Vagina (tissue), 2 donors: ENCODE measurements at regions of chr3 and their contacts with region 1.

Region 1: DNA sequence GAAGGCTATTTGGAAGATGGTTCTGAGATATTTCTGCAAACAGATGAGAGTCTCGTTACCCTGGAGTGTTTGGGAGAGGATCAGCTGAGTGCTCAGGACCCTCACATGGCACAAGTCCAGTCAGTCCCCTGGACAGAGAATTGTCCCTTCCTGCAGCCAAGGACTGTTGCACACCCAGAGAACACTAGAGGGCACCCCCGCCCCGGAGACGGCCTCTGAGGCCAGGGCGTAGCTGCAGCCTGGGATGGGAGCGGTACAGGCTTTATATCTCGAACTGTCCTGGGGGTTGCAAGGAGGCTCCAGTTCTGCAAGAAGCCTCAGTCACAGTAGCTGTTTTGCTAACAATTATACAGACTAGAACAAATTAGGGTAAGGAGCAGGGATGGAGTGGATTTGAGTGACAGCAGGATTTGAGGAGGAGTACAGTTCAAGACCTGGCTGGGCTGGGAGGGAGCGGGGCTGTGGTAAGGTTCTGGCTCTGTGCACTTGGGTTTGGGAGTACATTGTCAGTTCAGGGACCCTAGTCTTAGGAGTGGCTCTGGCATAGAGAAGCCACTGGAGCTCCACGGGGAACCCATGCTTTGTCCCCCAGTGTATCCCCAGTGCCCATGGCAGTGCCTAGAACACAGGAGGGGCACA is 67.6 kb upstream of the HACD2 start:
- DNase-seq: no peak
- H3K4me3 ChIP-seq: no peak overlapping the region
- H3K27ac ChIP-seq: peak overlapping the region; percentile 81
- H3K4me1 ChIP-seq: peaks cover 52% of the 10 kb centered on the region
- H3K27me3 ChIP-seq: no peaks in the 10 kb centered on the region
- CTCF ChIP-seq: peak; percentile 72 to 88 (median 79)
- POLR2A ChIP-seq: no peak

Region 2: GRCh38 chr3:122481390-122481789 is 1171.1 kb before region 1 on chr3:
- intact Hi-C with region 1: no loop called
- DNase-seq: no peak
- H3K4me3 ChIP-seq: no peak overlapping the region
- H3K27ac ChIP-seq: no peak overlapping the region
- H3K4me1 ChIP-seq: peaks cover 17% of the 10 kb centered on the region
- H3K27me3 ChIP-seq: no peaks in the 10 kb centered on the region
- CTCF ChIP-seq: no peak
- POLR2A ChIP-seq: no peak

Region 3: DNA sequence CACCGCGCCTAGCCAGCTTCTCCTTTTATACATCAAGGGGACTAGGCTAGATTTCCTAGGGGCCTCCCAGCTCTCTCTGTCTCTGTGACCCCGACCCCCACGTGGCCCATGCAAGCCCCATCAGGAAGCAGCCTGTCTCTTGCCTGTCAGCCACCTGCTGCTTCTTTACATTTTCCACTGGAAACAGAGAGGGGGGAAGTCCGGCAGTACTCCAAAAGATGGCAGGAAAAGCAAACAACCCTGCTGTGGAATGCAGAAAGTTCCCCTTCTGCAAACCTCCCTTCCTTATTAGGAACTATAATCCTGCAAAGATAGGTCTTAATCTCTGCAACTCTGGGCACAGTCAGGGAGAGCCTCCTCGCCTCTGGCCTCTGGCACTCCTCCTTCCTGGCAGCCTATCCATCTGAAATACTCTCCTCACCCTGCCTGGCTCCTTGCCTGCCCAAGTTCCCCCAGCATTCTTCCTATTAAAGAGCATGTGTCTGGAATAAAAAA is 20.3 kb before region 1 on chr3:
- intact Hi-C with region 1: no loop called
- DNase-seq: peak in 1 of 2 donors; percentile 67
- H3K4me3 ChIP-seq: no peak overlapping the region
- H3K27ac ChIP-seq: no peak overlapping the region
- H3K4me1 ChIP-seq: peaks cover 38% of the 10 kb centered on the region
- H3K27me3 ChIP-seq: no peaks in the 10 kb centered on the region
- CTCF ChIP-seq: no peak
- POLR2A ChIP-seq: no peak

Region 4: DNA sequence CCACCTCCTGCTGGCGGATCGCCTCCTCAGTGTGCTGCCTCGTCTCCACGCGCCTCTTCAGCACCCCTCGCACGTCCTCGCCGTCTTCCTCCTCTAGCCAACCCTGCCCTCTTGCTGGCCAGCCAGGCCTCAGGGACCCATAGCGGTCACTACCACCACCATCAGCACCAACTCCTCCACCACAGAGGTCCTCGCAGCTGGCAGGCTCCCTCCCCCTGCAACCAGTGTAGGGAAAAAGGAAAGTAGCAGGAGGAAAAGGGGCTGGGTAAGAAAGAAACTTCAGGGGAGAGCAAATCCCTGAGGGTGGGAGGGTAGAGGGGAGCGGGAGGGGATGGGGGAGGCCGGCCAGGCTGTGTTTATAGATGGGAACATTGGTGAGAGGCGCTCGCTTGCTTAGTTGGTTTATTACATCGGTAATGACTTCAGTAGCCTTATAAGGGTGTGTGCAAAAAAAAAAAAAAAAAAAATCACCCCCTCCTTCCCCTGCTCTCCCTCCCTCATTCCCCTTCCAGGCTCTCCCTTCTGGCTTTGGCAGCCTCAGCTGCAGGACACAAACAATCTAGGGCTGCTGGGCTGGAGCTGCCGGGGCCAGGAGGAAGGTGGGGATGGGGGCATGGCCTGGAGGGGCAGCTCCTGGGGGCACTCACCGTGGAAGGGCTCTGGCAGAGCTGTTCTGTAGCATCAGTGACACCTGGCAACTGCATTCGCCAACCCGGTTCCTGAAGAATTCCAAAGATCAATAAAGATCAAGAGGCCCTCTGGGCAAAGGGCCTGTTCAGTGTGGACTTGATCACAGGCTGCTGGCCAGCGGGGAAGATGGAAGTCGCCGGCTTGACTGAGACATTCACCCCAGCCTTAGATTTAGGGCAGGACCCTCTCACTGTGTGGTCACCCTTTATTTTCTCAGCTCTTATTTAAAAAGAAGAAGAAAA is 48.6 kb after region 1 on chr3:
- intact Hi-C with region 1: loop called (anchors 5 kb)
- DNase-seq: no peak
- H3K4me3 ChIP-seq: peak overlapping the region; percentile 50 to 58
- H3K27ac ChIP-seq: peak overlapping the region; percentile 79
- H3K4me1 ChIP-seq: peaks cover 7% of the 10 kb centered on the region
- H3K27me3 ChIP-seq: no peaks in the 10 kb centered on the region
- CTCF ChIP-seq: no peak
- POLR2A ChIP-seq: peak in 1 of 2 donors; percentile 4

Region 5: GRCh38 chr3:123723522-123724168 is 71.2 kb after region 1 on chr3:
- intact Hi-C with region 1: loop called (anchors 5 kb)
- DNase-seq: peak in 1 of 2 donors; percentile 85
- H3K4me3 ChIP-seq: no peak overlapping the region
- H3K27ac ChIP-seq: no peak overlapping the region
- H3K4me1 ChIP-seq: peaks cover 34% of the 10 kb centered on the region
- H3K27me3 ChIP-seq: no peaks in the 10 kb centered on the region
- CTCF ChIP-seq: peak; percentile 56 to 68 (median 68)
- POLR2A ChIP-seq: no peak

Region 6: GRCh38 chr3:124905849-124906248 is 1253.4 kb after region 1 on chr3:
- intact Hi-C with region 1: no loop called
- DNase-seq: no peak
- H3K4me3 ChIP-seq: no peak overlapping the region
- H3K27ac ChIP-seq: no peak overlapping the region
- H3K4me1 ChIP-seq: peaks cover 5% of the 10 kb centered on the region
- H3K27me3 ChIP-seq: no peaks in the 10 kb centered on the region
- CTCF ChIP-seq: no peak
- POLR2A ChIP-seq: no peak